Sciatic nerve (tissue), 2 donors: ENCODE measurements at regions of chr1 and their contacts with region 1.

Region 1: DNA sequence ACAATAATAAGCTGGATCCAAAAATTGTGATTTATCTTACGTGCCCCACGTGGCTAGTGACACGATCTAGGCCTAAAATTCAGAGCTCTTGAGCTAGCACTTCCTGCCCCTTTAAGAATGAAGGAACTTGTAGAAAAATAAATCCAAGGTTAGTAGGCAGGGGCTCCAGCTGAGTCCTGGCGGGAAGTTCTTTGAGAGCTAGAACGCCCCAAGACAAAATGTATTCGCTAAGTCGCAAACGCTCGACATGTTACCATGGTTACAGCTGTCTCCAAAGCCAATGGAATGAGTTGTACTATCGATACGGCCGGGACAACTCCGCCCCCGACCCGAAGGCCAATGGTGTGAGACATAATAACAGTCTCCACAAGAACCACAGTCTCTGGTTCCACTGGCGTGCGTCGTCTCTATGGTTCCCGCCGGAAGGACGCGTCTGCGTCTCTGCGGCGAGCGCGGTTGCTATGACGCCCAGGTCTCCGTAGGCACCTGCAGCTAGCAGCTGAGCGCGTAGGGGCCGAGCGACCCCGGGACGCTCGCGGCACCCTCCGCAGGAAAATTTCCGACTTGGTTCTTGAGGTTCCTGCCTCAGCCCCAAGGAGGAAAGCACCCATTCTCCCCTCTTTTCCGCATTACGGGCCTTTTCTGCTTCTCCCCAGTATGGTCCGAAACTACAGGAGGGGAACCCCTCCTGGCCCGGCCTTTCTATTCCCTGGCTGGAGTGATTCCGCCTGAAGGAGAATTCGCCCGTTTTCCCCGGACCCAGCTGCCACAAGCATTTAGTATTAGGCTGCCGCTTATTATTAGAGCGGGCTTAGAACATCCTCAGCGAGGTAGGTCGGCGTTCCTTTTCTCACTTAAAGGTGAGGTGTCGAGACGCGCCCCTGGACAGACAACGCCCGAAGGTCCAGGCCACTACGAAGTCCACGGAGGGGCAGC is at the start of gene CCDC30:
- DNase-seq: peak; percentile 96
- ATAC-seq: peak; percentile 100
- total RNA-seq, gene CCDC30: 10.9 TPM

Region 2: GRCh38 chr1:42305639-42306038 is 157.5 kb before region 1 on chr1:
- intact Hi-C with region 1: no loop called
- DNase-seq: no peak
- ATAC-seq: no peak

Region 3: GRCh38 chr1:42385283-42385682 is 77.8 kb before region 1 on chr1:
- intact Hi-C with region 1: no loop called
- DNase-seq: no peak
- ATAC-seq: no peak

Region 4: DNA sequence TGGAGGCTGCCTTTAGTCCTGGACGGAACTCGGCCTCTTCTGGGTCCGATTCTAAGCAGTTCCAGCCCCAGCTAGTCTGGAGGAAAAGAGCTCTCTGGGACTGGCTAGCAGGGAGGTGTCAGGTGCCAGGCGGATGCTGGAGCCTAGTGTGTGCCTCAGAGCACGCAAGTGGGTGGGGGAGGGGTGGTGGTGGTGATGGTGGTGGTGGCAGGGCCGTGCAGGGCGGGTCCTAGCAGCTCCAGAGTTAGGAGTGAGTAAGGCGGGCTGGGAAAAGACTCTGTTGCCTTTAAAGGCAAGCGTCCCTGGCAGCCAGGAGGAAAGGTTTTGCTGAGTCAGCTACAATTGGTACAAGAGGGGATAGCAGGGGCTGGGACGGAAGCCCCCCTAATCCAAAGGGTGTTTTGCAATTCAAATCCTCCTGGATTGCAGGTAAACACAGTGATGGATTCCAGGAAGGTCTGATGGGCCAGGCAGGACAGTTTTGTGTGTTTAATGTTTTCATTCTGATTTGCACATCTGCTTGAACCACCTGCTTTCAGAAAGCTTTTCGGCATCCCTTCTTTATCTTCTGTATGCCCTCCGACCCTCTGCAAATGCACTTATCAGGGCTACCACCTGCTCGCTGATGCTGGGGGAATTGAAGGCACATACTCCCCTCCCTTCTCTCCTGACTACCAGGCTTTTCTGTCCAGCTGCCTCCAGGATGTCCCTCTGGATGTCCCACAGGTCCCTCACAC is 499.7 kb after region 1 on chr1:
- intact Hi-C with region 1: loop called (anchors 5 kb)
- DNase-seq: no peak
- ATAC-seq: peak; percentile 32